ENCODE measurements at regions of chr3 and their contacts with region 1.

Region 1: DNA sequence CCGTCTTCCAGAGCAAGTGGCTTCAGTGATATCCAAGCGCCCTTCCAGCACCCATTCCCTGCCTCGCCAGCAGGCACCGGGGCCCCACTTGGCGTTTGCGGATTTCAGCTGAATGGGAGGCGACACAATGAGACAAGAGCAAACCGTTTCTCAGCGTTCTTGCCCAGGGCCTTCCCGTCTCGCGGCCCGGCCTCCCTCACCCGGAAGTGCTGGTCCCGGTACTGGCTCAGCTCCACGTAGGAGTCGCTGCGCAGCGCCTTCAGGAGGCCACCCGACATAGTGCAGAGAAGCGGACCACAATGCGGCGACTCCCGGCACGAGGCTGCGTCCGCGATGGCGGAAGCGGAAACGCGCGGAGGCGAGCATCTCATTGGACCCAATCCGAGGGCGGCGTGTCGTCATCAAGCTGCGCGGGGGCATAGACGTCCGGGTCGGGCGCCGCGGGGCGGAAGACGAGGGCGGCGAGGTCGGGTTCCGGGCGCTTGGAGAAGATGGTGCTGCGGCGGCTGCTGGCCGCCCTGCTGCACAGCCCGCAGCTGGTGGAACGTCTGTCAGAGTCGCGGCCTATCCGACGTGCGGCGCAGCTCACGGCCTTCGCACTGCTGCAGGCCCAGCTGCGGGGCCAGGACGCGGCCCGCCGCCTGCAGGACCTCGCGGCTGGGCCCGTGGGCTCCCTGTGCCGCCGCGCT is at the start of gene NCBP2:
- DNase-seq: peak; percentile 100
- H3K4me3 Mint-ChIP-seq: peak within 1 kb of the TSS; percentile 89
- H3K27ac Mint-ChIP-seq: peak within 1 kb of the TSS; percentile 95
- H3K4me1 Mint-ChIP-seq: peaks cover 41% of the 10 kb centered on the region
- H3K27me3 Mint-ChIP-seq: peaks cover 2% of the 10 kb centered on the region
- total RNA-seq, gene NCBP2: 101 and 105 TPM in 2 replicates

Region 2: DNA sequence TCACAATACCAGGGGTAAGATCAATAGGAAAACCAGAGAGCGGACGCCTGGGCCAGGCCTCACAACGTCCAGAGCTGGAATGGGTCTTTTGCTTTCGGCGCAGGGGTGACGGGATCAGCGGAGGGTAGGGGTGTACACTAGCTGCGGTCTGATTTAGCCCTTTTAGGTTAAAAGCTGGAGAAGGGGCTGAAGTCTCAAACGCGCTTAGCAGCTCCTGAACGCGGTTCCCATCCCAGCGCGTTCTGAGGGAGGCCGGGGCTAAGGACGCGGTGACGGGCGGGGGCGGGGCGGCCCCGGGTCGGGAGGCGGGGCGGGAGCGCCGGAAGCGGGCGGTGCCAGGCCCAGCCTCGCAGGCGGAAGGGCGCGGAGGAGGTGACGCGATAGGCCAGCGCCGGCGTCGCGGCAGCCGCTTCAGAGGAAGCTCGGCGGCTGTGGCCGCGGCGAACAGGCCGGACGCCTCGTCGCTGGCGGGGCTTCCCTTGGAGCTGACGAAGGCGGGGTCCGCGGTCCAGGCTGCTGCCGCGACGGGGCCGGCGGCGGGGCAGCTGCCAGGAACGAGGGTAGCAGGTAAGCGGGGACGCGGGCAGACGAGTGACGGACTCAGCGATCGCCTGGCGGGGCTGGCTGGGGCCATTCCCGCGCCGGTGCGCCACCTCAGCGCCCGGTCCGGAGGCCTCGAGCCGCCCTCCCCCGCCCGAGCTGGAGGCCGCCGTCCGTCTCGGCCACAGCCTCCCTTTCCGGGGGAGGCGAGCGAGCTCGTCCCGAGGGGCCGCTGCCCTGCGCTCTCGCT is 74.7 kb before region 1 on chr3 and contains the start of gene SENP5:
- intact Hi-C with region 1: loop called (anchors 1 kb)
- DNase-seq: peak; percentile 97
- H3K4me3 Mint-ChIP-seq: peak within 1 kb of the TSS; percentile 96
- H3K27ac Mint-ChIP-seq: peak within 1 kb of the TSS; percentile 93
- H3K4me1 Mint-ChIP-seq: peaks cover 17% of the 10 kb centered on the region
- H3K27me3 Mint-ChIP-seq: no peaks in the 10 kb centered on the region
- total RNA-seq, gene SENP5: 44.2 and 47.2 TPM in 2 replicates

Measured in activated CD4-positive, alpha-beta T cell treated with anti-CD3 and anti-CD28 coated beads, Interleukin-2, amount 10 ng/mL, durations not matched to agents 24 days and 14 days (primary cell).